ENCODE measurements at regions of chr2 and their contacts with region 1.

Region 1: DNA sequence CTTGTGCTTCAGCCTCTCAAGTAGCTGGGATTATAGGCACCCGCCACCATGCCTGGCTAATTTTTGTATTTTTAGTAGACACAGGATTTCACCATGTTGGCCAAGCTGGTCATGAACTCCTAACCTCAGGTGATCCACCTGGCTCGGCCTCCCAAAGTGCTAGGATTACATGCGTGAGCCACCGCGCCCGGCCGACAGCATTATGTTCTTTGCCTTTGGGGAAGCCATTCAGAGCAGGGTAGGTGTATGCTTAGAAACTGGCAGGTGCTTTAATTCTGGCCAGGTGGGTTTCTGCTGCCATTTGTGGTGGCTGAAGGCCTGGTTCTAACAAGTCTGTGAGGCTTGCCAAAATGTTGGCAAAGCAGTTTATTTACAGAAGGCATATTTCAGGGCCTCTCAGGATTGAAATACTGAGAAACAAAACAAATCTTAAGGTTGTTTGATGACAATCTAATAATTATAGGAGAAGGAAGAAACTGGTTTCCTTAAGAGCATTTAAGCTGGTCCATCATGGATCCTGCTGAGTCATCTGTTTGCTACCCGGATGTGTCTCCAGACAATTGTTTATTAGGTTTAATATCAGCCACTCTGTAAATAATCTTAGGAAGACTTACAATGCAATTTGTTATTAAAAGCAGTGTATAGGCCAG is 16.0 kb downstream of the SLC20A1 start:
- DNase-seq: no peak
- H3K4me3 Mint-ChIP-seq: no peak overlapping the region
- H3K27ac Mint-ChIP-seq: no peak overlapping the region
- H3K4me1 Mint-ChIP-seq: peaks cover 18% of the 10 kb centered on the region
- H3K27me3 Mint-ChIP-seq: no peaks in the 10 kb centered on the region
- CTCF ChIP-seq: no peak

Region 2: GRCh38 chr2:112481050-112481527 is 180.7 kb before region 1 on chr2:
- CTCF ChIA-PET with region 1: no interaction called
- intact Hi-C with region 1: no loop called
- DNase-seq: peak; percentile 86
- H3K4me3 Mint-ChIP-seq: peak overlapping the region; percentile 80
- H3K27ac Mint-ChIP-seq: peak overlapping the region; percentile 75
- H3K4me1 Mint-ChIP-seq: peaks cover 23% of the 10 kb centered on the region
- H3K27me3 Mint-ChIP-seq: no peaks in the 10 kb centered on the region
- CTCF ChIP-seq: peak; percentile 78

Region 3: GRCh38 chr2:112714836-112715631 is 53.3 kb after region 1 on chr2:
- CTCF ChIA-PET with region 1: no interaction called
- intact Hi-C with region 1: loop called (anchors 5 kb)
- DNase-seq: peak; percentile 44
- H3K4me3 Mint-ChIP-seq: no peak overlapping the region
- H3K27ac Mint-ChIP-seq: no peak overlapping the region
- H3K4me1 Mint-ChIP-seq: peaks cover 25% of the 10 kb centered on the region
- H3K27me3 Mint-ChIP-seq: peaks cover 8% of the 10 kb centered on the region
- CTCF ChIP-seq: no peak

Region 4: DNA sequence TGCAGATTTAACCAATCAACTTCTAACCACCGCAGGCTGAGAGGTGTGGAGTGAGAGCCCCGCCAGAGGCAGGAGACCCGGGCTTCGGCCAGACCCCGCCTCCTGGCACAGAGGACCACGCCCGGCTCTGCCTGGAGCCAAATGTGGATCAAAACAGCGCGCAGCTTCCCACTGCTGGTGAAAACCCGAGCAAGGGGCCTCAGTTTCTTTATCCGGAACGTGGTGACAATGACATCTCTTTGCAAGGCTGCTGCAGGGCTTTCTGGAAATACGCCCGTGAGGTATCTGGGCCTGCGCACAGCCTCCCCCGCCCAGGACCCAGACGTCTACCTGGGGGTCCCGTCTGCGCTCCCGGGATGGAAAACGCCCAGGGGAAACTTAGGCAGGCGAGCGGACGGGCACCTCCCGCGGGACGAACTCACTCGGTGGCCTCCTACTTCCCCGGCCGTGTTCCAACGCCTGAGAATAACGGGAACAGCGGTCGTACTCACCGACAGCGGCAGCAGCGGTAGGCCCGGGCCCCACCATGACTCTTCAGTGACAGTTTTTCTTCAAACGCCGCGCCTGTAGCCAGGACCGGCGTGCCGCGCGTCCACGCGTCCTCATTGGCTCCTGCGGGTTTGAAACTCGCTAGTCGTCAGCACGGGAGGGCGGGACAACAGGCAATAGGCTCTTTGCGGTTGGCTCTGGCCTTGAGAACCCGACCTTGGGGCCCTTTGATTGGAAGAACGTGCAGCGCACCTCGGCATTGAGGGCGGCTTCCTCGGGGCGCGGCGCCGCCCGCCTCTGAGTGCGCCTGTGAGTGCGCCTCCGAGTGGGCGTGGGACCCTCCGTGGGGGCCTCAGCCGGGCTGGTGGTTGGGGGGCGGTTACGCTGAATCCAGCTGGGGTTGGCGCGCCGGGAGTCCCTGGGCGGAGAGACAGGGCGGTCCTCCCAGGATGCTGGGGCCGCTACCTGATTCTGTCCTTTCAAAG is 102.6 kb after region 1 on chr2 and contains the start of gene CKAP2L:
- CTCF ChIA-PET with region 1: no interaction called
- intact Hi-C with region 1: no loop called
- DNase-seq: peak; percentile 96
- H3K4me3 Mint-ChIP-seq: peak within 1 kb of the TSS; percentile 98
- H3K27ac Mint-ChIP-seq: peak within 1 kb of the TSS; percentile 24
- H3K4me1 Mint-ChIP-seq: peaks cover 56% of the 10 kb centered on the region
- H3K27me3 Mint-ChIP-seq: no peaks in the 10 kb centered on the region
- CTCF ChIP-seq: no peak
- total RNA-seq, gene CKAP2L: 27.4 and 42.5 TPM in 2 replicates

Measured in Calu3 (cell line).